Tibial artery (tissue), 4 donors: ENCODE measurements at regions of chr10 and their contacts with region 1.

Region 1: GRCh38 chr10:75401569-75402485 is at the start of gene ZNF503:
- DNase-seq: peak; percentile 98 to 99
- H3K4me3 ChIP-seq: peak within 1 kb of the TSS; percentile 88 to 92
- H3K27ac ChIP-seq: peak within 1 kb of the TSS; percentile 93 to 97
- H3K4me1 ChIP-seq: peaks cover 0 to 31% (median 27%) of the 10 kb centered on the region in 4 donors
- H3K27me3 ChIP-seq: no peaks in the 10 kb centered on the region
- CTCF ChIP-seq: peak; percentile 25 to 53

Region 2: GRCh38 chr10:75662715-75663114 is 260.9 kb after region 1 on chr10:
- intact Hi-C with region 1: loop called (anchors 5 kb)
- DNase-seq: peak; percentile 89
- H3K4me3 ChIP-seq: no peak overlapping the region
- H3K27ac ChIP-seq: peak overlapping the region; percentile 73 to 80
- H3K4me1 ChIP-seq: peaks cover 0 to 67% (median 26%) of the 10 kb centered on the region in 4 donors
- H3K27me3 ChIP-seq: no peaks in the 10 kb centered on the region
- CTCF ChIP-seq: no peak

Region 3: GRCh38 chr10:76036111-76036940 is 634.5 kb after region 1 on chr10:
- intact Hi-C with region 1: loop called (anchors 5 kb)
- DNase-seq: peak; percentile 75 to 88
- H3K4me3 ChIP-seq: peak overlapping the region; percentile 24 to 36
- H3K27ac ChIP-seq: peak overlapping the region; percentile 11 to 39
- H3K4me1 ChIP-seq: peaks cover 0 to 35% (median 10%) of the 10 kb centered on the region in 4 donors
- H3K27me3 ChIP-seq: no peaks in the 10 kb centered on the region
- CTCF ChIP-seq: peak; percentile 88 to 95

Region 4: DNA sequence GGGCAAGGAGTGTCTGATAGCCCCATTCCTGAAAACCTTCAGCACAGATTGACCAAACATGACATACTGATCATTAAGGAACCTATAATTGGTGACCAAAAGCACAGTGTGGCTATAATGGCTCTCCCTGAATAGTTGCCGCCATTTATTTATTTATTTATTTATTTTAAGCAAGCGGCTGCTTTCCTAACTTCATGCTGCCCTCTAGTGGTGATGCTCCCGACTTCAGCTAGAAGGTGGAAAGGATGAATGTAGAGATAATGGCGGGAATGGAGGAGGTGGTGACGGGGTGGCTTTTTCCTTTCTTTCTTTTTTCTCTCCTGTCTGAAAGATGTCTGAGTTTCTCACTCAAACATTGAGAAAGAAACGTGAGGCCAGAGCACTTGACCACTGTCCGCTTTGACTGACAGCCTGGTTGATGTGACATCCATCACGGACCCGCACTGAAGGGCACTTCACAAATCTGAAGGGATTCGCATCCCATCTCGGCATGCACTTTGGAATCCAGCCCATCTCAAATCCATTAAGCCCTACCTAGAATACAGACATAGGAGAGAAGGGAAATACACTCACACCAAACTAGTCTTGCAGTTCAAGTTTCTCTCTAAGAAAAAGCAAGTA is 1145.6 kb after region 1 on chr10:
- intact Hi-C with region 1: loop called (anchors 5 kb)
- DNase-seq: peak; percentile 85 to 91
- H3K4me3 ChIP-seq: no peak overlapping the region
- H3K27ac ChIP-seq: no peak overlapping the region
- H3K4me1 ChIP-seq: peaks cover 0 to 21% (median 3%) of the 10 kb centered on the region in 4 donors
- H3K27me3 ChIP-seq: no peaks in the 10 kb centered on the region
- CTCF ChIP-seq: peak; percentile 83 to 88